ENCODE measurements at regions of chr7 and their contacts with region 1.

Region 1: DNA sequence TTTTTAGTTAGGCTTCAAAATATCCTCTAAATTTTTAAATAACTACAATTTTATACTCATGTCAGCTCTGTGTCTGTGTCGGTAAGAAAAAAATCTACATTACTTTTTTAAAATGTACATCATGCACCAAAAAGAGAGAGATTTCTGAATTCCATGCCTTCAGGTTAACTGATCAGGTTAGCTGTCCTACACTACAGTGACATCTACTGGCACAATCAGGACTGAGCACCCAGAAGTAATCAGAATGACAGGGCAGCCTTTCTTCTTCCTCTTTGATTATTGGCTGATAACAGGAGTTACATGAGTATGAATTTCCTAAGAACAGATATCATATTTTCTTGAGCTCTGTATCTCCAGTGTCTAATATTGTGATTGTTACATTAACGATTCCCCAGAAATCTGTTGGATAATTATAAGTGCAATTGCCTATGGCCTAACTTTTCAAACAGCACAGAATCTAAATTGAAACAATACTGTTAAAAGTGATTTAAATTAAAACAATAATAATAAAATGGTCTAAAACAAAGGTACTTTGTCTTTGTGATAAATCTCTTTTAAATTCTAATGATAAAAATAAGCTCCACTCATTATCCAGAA is 41.8 kb upstream of the HYCC1 start:
- DNase-seq: no peak
- ATAC-seq: peak; percentile 89 to 91
- H3K4me3 ChIP-seq: no peak overlapping the region
- H3K27ac ChIP-seq: no peak overlapping the region
- H3K4me1 ChIP-seq: no peaks in the 10 kb centered on the region
- H3K27me3 ChIP-seq: no peaks in the 10 kb centered on the region
- CTCF ChIP-seq: peak; percentile 90

Region 2: DNA sequence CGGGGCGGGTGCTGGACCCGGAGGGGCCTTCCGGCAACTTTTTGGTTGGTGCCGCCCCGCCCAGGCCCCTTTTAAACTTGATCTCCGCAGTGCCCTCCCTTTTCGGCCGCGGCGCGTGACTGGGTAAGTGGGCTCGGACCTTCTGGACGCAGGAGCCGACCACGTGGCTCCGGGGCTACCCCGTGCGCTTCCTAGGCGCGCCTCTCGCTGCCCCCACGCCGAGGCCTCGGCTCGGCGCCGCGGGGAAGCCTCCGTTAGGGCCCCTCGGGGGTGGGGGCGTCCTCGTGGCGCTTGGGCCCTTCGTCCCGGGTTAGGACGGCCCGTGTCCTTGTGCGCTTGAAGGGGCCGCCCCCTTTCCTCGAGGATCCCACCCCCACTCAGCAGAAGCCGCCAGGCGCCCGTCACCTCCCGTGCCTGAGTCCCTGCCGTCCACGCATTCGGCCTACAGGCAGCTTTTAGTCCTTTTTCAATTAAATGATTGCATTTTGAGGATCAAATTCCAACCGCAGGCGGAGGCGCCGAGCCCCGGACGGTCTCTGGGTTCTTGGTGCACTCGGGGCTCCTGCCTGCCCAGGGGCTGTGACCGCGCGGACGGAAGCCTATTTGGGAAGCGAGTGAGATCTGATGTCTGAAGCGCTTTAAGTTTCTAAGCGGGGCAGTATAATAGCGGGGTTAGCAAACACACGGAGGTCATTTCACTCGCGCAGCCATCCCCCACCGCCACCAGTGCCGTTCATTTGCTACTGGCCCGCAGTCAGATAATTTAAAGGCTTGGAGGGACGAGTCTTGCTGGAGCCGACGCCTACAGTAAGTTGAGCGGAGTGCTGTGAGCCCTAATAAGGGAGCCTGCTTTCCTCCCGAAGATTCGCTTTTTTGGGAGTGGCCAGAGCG is 201.3 kb before region 1 on chr7:
- intact Hi-C with region 1: loop called (anchors 10 kb)
- DNase-seq: peak; percentile 94
- ATAC-seq: peak; percentile 93 to 96
- H3K4me3 ChIP-seq: peak overlapping the region; percentile 72
- H3K27ac ChIP-seq: peak overlapping the region; percentile 89
- H3K4me1 ChIP-seq: peaks cover 16% of the 10 kb centered on the region
- H3K27me3 ChIP-seq: no peaks in the 10 kb centered on the region
- CTCF ChIP-seq: peak; percentile 85